Transverse colon (tissue), 4 donors: ENCODE measurements at regions of chr2 and their contacts with region 1.

Region 1: DNA sequence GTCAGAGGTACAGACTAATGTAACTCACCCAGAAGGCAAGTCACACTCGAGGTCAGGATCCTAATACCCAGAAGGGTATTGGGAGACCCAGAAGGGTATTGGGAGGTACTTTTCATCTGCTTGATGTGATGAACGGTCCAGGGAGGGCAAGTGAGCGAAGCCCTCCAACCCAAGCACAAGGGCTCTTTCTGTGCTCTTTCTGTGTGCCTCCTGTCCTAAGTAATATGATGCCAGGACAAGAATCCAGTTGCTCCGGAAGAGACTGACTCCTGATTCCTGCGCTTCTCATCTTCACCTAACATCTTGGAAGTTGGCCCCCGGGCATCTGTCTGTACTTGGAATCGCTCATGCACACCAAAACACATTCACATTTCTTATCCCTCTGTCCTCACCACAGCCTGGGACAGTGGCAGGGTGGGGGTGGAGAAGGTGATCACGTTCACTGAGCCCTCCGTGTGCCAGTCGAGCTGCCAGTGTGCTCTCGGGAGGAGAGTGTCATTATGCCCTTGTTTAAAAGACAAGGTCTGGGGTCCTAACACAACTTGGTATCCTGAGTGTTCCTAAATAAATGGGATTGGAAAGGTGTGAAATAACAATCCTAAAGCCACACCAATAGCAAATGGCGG is 17.1 kb downstream of the GYPC start:
- DNase-seq: no peak
- H3K4me3 ChIP-seq: no peak overlapping the region
- H3K27ac ChIP-seq: no peak overlapping the region
- H3K4me1 ChIP-seq: no peaks in the 10 kb centered on the region
- H3K27me3 ChIP-seq: no peaks in the 10 kb centered on the region
- CTCF ChIP-seq: no peak
- EP300 ChIP-seq: no peak
- POLR2A ChIP-seq: no peak

Region 2: DNA sequence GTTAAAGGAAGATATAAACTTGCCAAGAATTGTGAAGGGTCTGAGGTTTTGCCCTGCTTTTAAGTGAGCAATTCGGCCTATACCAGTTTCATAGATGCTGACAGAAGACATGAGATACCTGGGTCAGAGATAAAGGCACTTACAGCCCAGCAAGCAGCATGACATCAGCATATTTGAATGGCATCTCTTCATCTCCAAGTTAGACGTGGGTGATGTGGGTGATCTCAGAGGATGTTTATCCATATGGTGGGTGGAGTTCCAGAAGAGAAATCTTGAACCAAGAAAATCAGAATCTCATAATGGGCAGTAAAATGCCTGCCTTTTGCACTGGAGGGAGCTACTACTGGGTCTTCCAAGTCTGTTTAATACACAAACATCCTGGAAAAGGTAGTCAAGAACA is 27.6 kb after region 1 on chr2:
- in situ Hi-C with region 1: no loop called
- intact Hi-C with region 1: loop called (anchors 1 kb)
- DNase-seq: no peak
- H3K4me3 ChIP-seq: no peak overlapping the region
- H3K27ac ChIP-seq: peak overlapping the region in 2 of 4 donors; percentile 7 to 12
- H3K4me1 ChIP-seq: peaks cover 0 to 6% (median 0%) of the 10 kb centered on the region in 4 donors
- H3K27me3 ChIP-seq: no peaks in the 10 kb centered on the region
- CTCF ChIP-seq: no peak
- EP300 ChIP-seq: no peak
- POLR2A ChIP-seq: no peak

Region 3: DNA sequence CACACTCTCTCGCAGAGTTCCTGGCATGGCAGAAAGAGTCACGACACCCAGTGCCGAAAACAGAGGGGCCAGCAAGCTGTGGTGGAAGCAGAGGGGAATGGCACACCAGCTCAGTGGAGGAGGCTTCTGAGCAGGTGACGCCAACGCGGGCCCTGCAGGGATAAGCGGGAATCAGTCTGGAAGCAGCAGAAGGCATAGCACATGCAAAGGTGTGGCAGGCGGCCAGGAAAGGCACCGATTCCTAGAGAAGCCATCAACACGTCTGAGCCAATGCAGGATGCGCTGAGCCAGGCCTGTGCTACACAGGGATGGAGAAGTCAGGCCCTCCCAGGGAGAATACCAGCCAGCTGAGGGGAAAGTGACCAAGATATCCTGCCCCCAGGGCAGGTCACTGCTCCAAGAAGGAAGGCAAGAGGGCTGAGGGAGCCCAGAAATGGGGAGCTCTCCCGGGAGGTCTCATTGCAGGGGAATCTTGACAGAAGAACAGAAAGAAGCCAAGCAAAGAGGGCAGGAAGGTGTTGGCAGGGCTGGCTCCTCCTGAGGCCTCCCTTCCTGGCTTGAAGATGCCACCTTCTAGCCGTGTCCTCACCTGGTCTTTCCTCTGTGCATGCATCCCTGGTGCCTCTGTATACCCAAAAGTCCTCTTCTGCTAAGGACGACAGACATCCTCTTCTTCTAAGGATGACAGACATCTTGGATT is 241.9 kb after region 1 on chr2:
- in situ Hi-C with region 1: no loop called
- intact Hi-C with region 1: no loop called
- DNase-seq: no peak
- H3K4me3 ChIP-seq: no peak overlapping the region
- H3K27ac ChIP-seq: no peak overlapping the region
- H3K4me1 ChIP-seq: no peaks in the 10 kb centered on the region
- H3K27me3 ChIP-seq: no peaks in the 10 kb centered on the region
- CTCF ChIP-seq: no peak
- EP300 ChIP-seq: no peak
- POLR2A ChIP-seq: no peak

Region 4: DNA sequence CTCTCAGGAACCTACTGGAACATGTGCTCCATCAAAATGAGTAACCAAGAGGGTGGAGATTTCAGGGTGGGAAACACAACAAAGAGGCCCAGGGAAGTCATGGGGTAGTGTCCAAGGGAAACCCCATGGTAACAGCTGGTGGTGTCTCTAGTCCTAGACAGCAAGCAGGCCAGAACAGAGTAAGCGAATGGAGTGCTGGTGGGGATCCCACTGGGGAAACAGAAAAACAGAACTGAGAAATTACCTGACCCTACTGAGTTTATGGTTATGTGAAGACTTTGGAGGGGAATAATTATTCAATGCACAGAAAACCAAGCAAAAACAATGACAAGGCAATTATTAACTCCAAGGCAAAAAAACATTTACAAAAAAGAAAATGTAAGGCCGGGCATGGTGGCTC is 603.9 kb after region 1 on chr2:
- in situ Hi-C with region 1: no loop called
- intact Hi-C with region 1: no loop called
- DNase-seq: no peak
- H3K4me3 ChIP-seq: no peak overlapping the region
- H3K27ac ChIP-seq: no peak overlapping the region
- H3K4me1 ChIP-seq: no peaks in the 10 kb centered on the region
- H3K27me3 ChIP-seq: no peaks in the 10 kb centered on the region
- CTCF ChIP-seq: no peak
- EP300 ChIP-seq: no peak
- POLR2A ChIP-seq: no peak